ENCODE measurements at regions of chr7 and their contacts with region 1.

Region 1: DNA sequence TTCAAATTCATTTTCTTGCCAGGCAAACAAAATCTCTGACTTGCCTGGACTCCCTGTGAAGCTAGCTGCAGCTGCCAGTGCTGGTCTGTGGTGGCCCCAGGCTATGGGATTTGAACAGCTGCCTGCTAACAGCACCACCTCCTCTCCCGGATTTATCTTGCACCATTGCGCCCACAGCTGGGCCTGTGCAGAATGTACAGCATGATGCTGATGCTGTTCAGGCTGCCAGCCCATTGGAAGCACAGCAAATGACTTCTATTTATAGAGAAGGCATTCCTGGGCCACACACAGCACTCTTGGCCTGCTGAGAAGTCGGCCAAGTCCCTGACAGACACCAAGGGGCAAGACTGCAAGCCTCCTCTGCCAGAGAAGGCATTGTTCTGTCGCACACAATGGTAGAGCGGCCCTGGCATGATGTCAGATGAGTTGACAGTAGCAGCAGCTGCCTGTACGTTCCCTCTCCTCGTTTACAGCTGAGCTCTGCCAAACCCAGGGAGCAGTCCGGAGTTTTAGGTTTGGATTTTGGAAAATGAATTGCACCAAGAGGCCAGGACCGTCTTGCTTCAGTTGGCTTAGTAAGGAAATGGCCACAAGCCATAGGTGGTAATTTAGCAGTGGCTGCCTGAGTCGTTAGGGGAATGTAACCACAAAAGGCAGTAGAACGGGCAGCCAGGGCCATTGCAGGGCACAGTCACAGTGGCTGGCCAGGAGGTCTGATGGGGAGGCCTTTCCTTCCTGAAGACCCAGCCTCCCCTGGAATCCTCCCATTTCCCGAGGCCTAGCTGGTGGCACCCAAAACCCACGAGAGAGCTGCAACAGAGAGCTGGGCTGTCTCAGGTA is 38.5 kb downstream of the MTURN start:
- DNase-seq: peak; percentile 83 to 95
- ATAC-seq: peak; percentile 85 to 87
- H3K4me3 ChIP-seq: peak overlapping the region in 2 of 4 donors; percentile 4 to 12
- H3K27ac ChIP-seq: peak overlapping the region; percentile 83 to 88 (median 86)
- H3K4me1 ChIP-seq: peaks cover 58 to 65% of the 10 kb centered on the region in 2 donors
- H3K27me3 ChIP-seq: no peaks in the 10 kb centered on the region
- CTCF ChIP-seq: peak in 1 of 5 experiments; percentile 30
- POLR2A ChIP-seq: peak in 1 of 2 donors; percentile 33

Region 2: DNA sequence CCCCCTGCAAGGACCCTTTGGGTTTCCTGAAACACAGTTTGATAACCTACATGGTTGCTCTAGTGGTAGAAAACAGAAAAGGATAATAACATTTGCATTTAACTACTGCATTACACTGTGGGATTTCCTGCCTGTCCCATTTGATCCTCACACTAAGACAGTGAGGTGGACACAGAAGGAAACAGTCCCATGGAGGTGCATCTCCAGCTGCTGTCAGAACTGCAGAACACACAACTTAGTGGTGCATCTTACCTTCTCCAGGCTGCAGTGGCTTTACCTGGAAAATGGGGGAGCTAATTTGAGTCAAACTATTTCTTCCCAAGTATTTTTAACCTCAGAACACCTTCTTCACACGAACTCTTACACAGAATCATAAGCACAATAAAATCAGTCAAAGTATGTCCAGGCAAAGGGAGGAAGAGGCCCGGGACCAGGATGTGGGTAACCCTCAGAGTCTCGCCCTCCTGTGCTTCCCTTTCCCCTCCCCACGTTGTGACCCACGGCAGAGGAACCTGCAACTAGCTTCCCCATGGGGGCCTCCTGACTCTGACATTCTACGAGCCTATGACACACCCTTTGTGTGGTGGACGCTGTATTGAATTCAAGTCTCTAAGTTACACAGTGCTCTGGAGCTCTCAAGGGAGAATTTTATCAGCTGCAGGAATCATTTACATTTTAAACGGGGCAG is 217.3 kb before region 1 on chr7:
- in situ Hi-C with region 1: no loop called
- intact Hi-C with region 1: no loop called
- DNase-seq: no peak
- ATAC-seq: no peak
- H3K4me3 ChIP-seq: no peak overlapping the region
- H3K27ac ChIP-seq: no peak overlapping the region
- H3K4me1 ChIP-seq: no peaks in the 10 kb centered on the region
- H3K27me3 ChIP-seq: no peaks in the 10 kb centered on the region
- CTCF ChIP-seq: no peak
- POLR2A ChIP-seq: no peak

Region 3: GRCh38 chr7:30134611-30135545 is 38.4 kb before region 1 on chr7 and contains the start of gene MTURN:
- in situ Hi-C with region 1: no loop called
- intact Hi-C with region 1: loop called (anchors 2 kb)
- DNase-seq: peak; percentile 74 to 81
- ATAC-seq: peak; percentile 88 to 89
- H3K4me3 ChIP-seq: peak within 1 kb of the TSS; percentile 83 to 88 (median 86)
- H3K27ac ChIP-seq: peak within 1 kb of the TSS; percentile 78 to 95 (median 88)
- H3K4me1 ChIP-seq: peaks cover 13 to 31% of the 10 kb centered on the region in 2 donors
- H3K27me3 ChIP-seq: no peaks in the 10 kb centered on the region
- CTCF ChIP-seq: no peak
- POLR2A ChIP-seq: peak; percentile 59 to 70
- total RNA-seq, gene MTURN: 32.9 to 81.9 (median 44.7) TPM

Region 4: GRCh38 chr7:30146127-30146612 is 27.1 kb before region 1 on chr7:
- in situ Hi-C with region 1: no loop called
- intact Hi-C with region 1: loop called (anchors 2 kb)
- DNase-seq: no peak
- ATAC-seq: peak in 1 of 2 donors; percentile 31
- H3K4me3 ChIP-seq: no peak overlapping the region
- H3K27ac ChIP-seq: peak overlapping the region in 3 of 4 donors; percentile 4 to 35 (median 17)
- H3K4me1 ChIP-seq: peaks cover 61 to 63% of the 10 kb centered on the region in 2 donors
- H3K27me3 ChIP-seq: no peaks in the 10 kb centered on the region
- CTCF ChIP-seq: no peak
- POLR2A ChIP-seq: no peak

Region 5: DNA sequence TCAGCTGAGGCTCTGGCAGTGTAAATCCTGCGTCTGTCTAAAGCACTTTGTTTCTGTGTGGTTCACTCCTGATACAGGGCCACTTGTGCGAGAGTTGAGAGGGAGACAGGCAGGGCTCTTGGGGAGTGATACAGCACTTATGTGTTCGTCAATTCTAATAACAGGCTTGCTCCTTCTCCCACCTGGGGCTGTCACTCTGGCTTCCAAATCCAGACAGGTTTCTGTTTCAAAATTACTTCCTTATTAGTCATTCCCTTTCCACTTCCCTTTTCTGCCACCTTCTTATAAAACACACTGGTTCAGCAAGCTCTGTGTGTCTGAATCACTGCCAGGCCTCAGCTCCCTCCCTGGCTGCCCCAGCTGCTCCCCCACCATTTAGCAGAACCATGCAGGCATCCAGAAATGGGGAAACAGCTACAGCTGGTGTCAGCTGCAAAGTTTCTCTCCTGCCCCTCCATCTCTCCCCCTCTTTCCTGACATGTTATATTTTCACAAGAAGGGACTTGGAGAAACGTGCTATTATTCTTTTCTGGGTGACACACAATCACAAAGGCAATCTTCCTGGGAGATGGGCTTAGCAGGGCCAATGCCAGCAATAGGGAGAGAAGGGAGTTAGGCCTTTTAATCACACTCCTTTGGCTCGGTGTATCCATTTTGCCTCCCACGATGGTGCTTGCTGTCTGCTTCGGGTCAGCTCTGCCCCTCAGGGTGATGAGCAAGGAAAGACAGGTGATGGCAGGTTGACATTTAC is 52.8 kb after region 1 on chr7:
- in situ Hi-C with region 1: no loop called
- intact Hi-C with region 1: loop called (anchors 1 kb)
- DNase-seq: peak; percentile 70 to 91
- ATAC-seq: peak; percentile 97
- H3K4me3 ChIP-seq: no peak overlapping the region
- H3K27ac ChIP-seq: peak overlapping the region; percentile 85 to 90 (median 88)
- H3K4me1 ChIP-seq: peaks cover 11 to 21% of the 10 kb centered on the region in 2 donors
- H3K27me3 ChIP-seq: no peaks in the 10 kb centered on the region
- CTCF ChIP-seq: no peak
- POLR2A ChIP-seq: no peak

Region 6: GRCh38 chr7:30284298-30285066 is 111.2 kb after region 1 on chr7 and contains the start of gene ZNRF2:
- in situ Hi-C with region 1: loop called in 3 of 4 experiments (anchors 10 kb)
- intact Hi-C with region 1: loop called (anchors 2 kb)
- DNase-seq: peak; percentile 100
- ATAC-seq: peak; percentile 76 to 79
- H3K4me3 ChIP-seq: peak within 1 kb of the TSS; percentile 77 to 98 (median 81)
- H3K27ac ChIP-seq: peak within 1 kb of the TSS; percentile 91 to 99 (median 96)
- H3K4me1 ChIP-seq: peaks cover 32 to 39% of the 10 kb centered on the region in 2 donors
- H3K27me3 ChIP-seq: no peaks in the 10 kb centered on the region
- CTCF ChIP-seq: peak; percentile 39 to 53 (median 50)
- POLR2A ChIP-seq: peak; percentile 89 to 93
- total RNA-seq, gene ZNRF2: 9.6 to 19.3 (median 17.4) TPM

Region 7: GRCh38 chr7:30406664-30407425 is 233.6 kb after region 1 on chr7:
- in situ Hi-C with region 1: loop called in 2 of 4 experiments (anchors 5 to 10 kb)
- intact Hi-C with region 1: loop called (anchors 1 kb)
- DNase-seq: peak; percentile 84 to 94
- ATAC-seq: peak; percentile 96
- H3K4me3 ChIP-seq: peak overlapping the region in 2 of 4 donors; percentile 8 to 9
- H3K27ac ChIP-seq: peak overlapping the region; percentile 83 to 87 (median 84)
- H3K4me1 ChIP-seq: peaks cover 0 to 4% of the 10 kb centered on the region in 2 donors
- H3K27me3 ChIP-seq: no peaks in the 10 kb centered on the region
- CTCF ChIP-seq: no peak
- POLR2A ChIP-seq: no peak

Region 8: DNA sequence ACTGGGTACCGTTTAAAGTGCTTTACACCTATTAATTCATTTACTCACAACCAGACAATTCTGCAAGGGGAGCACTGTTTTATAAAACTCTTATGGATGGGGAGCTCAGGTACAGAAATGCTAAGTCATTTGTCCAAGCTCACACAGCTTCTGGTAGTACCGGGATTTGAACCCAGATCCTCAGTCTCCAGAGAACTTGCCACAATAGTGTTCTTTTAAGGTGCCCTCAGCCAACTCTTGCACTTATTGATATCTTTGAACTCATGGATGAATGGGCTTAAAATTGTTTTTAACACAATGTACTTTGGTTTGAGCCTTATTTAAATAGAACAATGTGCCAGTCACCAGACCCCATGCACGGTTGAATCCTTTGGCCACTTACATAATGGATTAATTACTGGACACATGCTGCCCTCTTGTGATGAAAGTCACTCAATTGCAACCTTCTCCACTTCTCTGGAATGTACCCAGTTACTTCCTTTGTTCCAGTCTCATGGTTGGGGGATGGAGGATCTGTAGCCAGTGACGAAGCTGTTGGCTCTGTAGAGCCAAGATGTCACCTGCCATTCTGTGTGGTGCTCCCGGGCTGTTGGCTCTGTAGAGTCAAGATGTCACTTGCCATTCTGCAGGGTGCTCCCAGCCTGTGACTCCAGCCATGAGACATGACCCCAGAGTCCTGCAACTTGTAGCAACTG is 239.7 kb after region 1 on chr7:
- in situ Hi-C with region 1: loop called in 2 of 4 experiments (anchors 5 to 10 kb)
- intact Hi-C with region 1: no loop called
- DNase-seq: peak in 1 of 2 donors; percentile 47
- ATAC-seq: peak; percentile 94 to 97
- H3K4me3 ChIP-seq: no peak overlapping the region
- H3K27ac ChIP-seq: no peak overlapping the region
- H3K4me1 ChIP-seq: peaks cover 0 to 3% of the 10 kb centered on the region in 2 donors
- H3K27me3 ChIP-seq: no peaks in the 10 kb centered on the region
- CTCF ChIP-seq: peak; percentile 48 to 74 (median 62)
- POLR2A ChIP-seq: no peak

Region 9: DNA sequence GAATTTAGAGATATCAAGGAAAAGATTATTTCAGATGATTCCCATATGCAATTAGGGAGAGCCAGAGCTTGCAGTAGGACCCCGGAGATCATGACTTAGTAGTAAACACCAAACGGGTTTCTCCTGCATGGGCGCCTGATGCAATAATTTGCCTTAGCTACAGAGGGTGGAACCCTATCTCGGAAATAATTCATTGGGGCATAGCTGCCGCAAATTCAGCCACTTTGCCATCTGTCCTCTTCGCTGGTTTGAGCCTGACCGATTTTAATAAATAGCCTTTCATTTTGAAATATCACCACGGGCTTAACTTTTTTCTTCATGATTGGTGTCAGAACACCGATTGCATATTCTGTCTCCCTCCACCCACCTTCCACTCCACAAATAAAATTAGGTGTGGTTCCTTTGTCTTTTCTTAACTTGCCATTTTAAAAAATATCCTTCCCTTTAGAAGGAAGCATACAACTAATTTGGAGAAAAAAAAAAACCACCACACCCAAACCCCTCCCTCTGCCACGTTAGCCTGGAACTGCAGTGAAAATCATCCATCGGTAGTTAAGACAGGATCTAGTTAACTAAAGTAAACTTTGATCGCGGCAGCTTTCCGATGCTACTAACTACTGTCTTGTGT is 422.9 kb after region 1 on chr7:
- in situ Hi-C with region 1: no loop called
- intact Hi-C with region 1: no loop called
- DNase-seq: no peak
- ATAC-seq: no peak
- H3K4me3 ChIP-seq: peak overlapping the region; percentile 93 to 99 (median 98)
- H3K27ac ChIP-seq: peak overlapping the region; percentile 98 to 99 (median 98)
- H3K4me1 ChIP-seq: peaks cover 26 to 27% of the 10 kb centered on the region in 2 donors
- H3K27me3 ChIP-seq: no peaks in the 10 kb centered on the region
- CTCF ChIP-seq: no peak
- POLR2A ChIP-seq: no peak

Measured in gastrocnemius medialis (tissue), 4 donors.